ENCODE measurements at regions of chr16 and their contacts with region 1.

Region 1: GRCh38 chr16:9090960-9091866 is at the start of gene HAPSTR1:
- DNase-seq: peak; percentile 100
- ATAC-seq: peak; percentile 84
- H3K4me3 ChIP-seq: peak within 1 kb of the TSS; percentile 84 to 95 (median 88)
- H3K4me3 Mint-ChIP-seq: peak within 1 kb of the TSS; percentile 97
- H3K27ac ChIP-seq: peak within 1 kb of the TSS; percentile 90 to 98
- H3K27ac Mint-ChIP-seq: peak within 1 kb of the TSS; percentile 98
- H3K4me1 ChIP-seq: peaks cover 31 to 37% of the 10 kb centered on the region in 2 donors
- H3K4me1 Mint-ChIP-seq: peaks cover 38% of the 10 kb centered on the region
- H3K27me3 ChIP-seq: no peaks in the 10 kb centered on the region
- H3K27me3 Mint-ChIP-seq: no peaks in the 10 kb centered on the region
- CTCF ChIP-seq: no peak
- total RNA-seq, gene HAPSTR1: 99.2 and 101 TPM in 2 replicates

Region 2: GRCh38 chr16:8885674-8886592 is 205.3 kb before region 1 on chr16:
- CTCF ChIA-PET with region 1: interaction called, 11 read pairs
- POLR2A ChIA-PET with region 1: interaction called, 18 read pairs
- intact Hi-C with region 1: loop called (anchors 1 kb)
- DNase-seq: peak; percentile 39
- ATAC-seq: no peak
- H3K4me3 ChIP-seq: no peak overlapping the region
- H3K4me3 Mint-ChIP-seq: no peak overlapping the region
- H3K27ac ChIP-seq: no peak overlapping the region
- H3K27ac Mint-ChIP-seq: peak overlapping the region; percentile 71
- H3K4me1 ChIP-seq: peaks cover 5 to 21% of the 10 kb centered on the region in 2 donors
- H3K4me1 Mint-ChIP-seq: peaks cover 23% of the 10 kb centered on the region
- H3K27me3 ChIP-seq: peaks cover 0 to 11% (median 5%) of the 10 kb centered on the region in 4 experiments
- H3K27me3 Mint-ChIP-seq: peaks cover 12% of the 10 kb centered on the region
- CTCF ChIP-seq: no peak

Region 3: GRCh38 chr16:8943966-8944759 is 147.1 kb before region 1 on chr16:
- CTCF ChIA-PET with region 1: interaction called, 4 read pairs
- POLR2A ChIA-PET with region 1: no interaction called
- intact Hi-C with region 1: loop called (anchors 5 kb)
- DNase-seq: peak; percentile 69
- ATAC-seq: peak; percentile 87
- H3K4me3 ChIP-seq: peak overlapping the region; percentile 26 to 62 (median 36)
- H3K4me3 Mint-ChIP-seq: peak overlapping the region; percentile 87
- H3K27ac ChIP-seq: peak overlapping the region; percentile 61 to 73
- H3K27ac Mint-ChIP-seq: peak overlapping the region; percentile 87
- H3K4me1 ChIP-seq: peaks cover 93 to 99% of the 10 kb centered on the region in 2 donors
- H3K4me1 Mint-ChIP-seq: peaks cover 97% of the 10 kb centered on the region
- H3K27me3 ChIP-seq: no peaks in the 10 kb centered on the region
- H3K27me3 Mint-ChIP-seq: no peaks in the 10 kb centered on the region
- CTCF ChIP-seq: no peak

Region 4: GRCh38 chr16:8958344-8959167 is 132.7 kb before region 1 on chr16:
- CTCF ChIA-PET with region 1: no interaction called
- POLR2A ChIA-PET with region 1: interaction called, 12 read pairs
- intact Hi-C with region 1: loop called (anchors 1 kb)
- DNase-seq: no peak
- ATAC-seq: no peak
- H3K4me3 ChIP-seq: peak overlapping the region in 2 of 5 experiments; percentile 3 to 17
- H3K4me3 Mint-ChIP-seq: peak overlapping the region; percentile 90
- H3K27ac ChIP-seq: peak overlapping the region in 1 of 2 donors; percentile 89
- H3K27ac Mint-ChIP-seq: peak overlapping the region; percentile 85
- H3K4me1 ChIP-seq: peaks cover 72 to 80% of the 10 kb centered on the region in 2 donors
- H3K4me1 Mint-ChIP-seq: peaks cover 76% of the 10 kb centered on the region
- H3K27me3 ChIP-seq: no peaks in the 10 kb centered on the region
- H3K27me3 Mint-ChIP-seq: no peaks in the 10 kb centered on the region
- CTCF ChIP-seq: no peak

Region 5: GRCh38 chr16:9077091-9077809 is 14.0 kb before region 1 on chr16:
- CTCF ChIA-PET with region 1: interaction called, 3 read pairs
- POLR2A ChIA-PET with region 1: interaction called, 49 read pairs
- intact Hi-C with region 1: loop called (anchors 1 kb)
- DNase-seq: peak; percentile 52
- ATAC-seq: peak; percentile 44
- H3K4me3 ChIP-seq: peak overlapping the region in 1 of 5 experiments; percentile 33
- H3K4me3 Mint-ChIP-seq: peak overlapping the region; percentile 23
- H3K27ac ChIP-seq: peak overlapping the region; percentile 21 to 61
- H3K27ac Mint-ChIP-seq: peak overlapping the region; percentile 68
- H3K4me1 ChIP-seq: peaks cover 21 to 27% of the 10 kb centered on the region in 2 donors
- H3K4me1 Mint-ChIP-seq: peaks cover 27% of the 10 kb centered on the region
- H3K27me3 ChIP-seq: no peaks in the 10 kb centered on the region
- H3K27me3 Mint-ChIP-seq: no peaks in the 10 kb centered on the region
- CTCF ChIP-seq: no peak

Region 6: DNA sequence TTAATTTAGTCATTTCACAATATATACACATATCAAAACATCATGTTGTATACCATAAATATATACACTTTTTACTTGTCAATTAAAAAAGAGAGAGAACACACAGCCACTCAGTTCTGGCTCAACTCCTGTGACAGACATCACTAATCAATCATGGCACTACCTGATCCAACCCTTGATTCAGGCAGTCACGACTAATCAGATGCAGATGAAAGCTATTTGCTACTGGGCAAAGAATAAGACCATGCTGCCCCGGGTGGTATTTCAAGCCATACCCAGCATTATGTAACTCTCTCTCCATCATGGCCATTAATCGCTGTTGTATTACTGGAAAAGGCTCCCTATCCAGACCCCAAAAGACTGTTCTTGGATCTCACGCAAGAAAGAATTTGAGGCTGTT is 345.9 kb after region 1 on chr16:
- CTCF ChIA-PET with region 1: no interaction called
- POLR2A ChIA-PET with region 1: no interaction called
- intact Hi-C with region 1: no loop called
- DNase-seq: no peak
- ATAC-seq: no peak
- H3K4me3 ChIP-seq: no peak overlapping the region
- H3K4me3 Mint-ChIP-seq: no peak overlapping the region
- H3K27ac ChIP-seq: no peak overlapping the region
- H3K27ac Mint-ChIP-seq: no peak overlapping the region
- H3K4me1 ChIP-seq: no peaks in the 10 kb centered on the region
- H3K4me1 Mint-ChIP-seq: no peaks in the 10 kb centered on the region
- H3K27me3 ChIP-seq: peaks cover 0 to 4% (median 0%) of the 10 kb centered on the region in 4 experiments
- H3K27me3 Mint-ChIP-seq: peaks cover 14% of the 10 kb centered on the region
- CTCF ChIP-seq: no peak